Mammary epithelial cell (primary cell): ENCODE measurements at regions of chr18 and their contacts with region 1.

Region 1: DNA sequence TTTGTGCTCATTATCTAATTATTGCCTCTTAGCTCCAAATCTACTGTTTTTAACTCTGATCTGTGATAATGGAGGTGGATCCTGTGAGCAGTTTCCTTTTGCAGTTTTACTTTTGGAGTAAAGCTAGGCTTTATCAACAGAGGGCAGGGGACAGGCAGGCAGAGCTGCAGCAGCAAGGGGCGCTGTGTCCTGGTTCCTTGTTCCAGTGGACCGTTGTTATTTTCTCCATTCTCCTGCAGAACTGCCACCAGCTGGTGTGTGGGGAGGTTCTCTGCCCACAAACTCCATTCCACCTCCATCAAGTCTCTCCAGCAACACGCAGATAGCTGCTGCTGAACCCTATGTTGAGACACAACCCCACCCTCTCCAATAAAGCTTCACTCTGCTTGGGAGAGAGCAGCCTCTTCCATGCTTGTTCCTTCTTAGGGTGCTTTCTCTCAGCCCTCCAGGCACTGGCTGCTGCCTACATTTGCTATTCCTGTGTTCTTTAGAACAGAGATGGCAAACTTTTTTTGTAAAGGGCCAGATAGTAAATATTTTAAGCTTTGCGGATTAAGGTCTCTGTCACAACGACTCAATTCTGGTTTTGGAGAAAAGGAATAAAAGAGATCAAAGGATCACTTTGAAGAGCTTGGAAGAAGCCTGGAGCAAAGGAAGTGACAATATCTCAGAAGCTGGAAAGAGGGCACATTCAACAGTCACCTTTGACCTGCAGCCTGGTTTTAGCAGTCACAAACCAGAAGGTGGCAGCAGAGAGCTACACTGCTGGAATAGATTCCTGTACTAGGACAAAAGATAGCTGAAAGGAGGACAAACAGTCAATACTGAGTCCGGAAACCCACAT is 208.8 kb downstream of the CCDC178 start:
- DNase-seq: peak; percentile 40
- H3K4me3 ChIP-seq: no peak overlapping the region
- H3K27ac ChIP-seq: no peak overlapping the region
- H3K4me1 ChIP-seq: no peaks in the 10 kb centered on the region
- H3K27me3 ChIP-seq: peaks cover 2% of the 10 kb centered on the region
- CTCF ChIP-seq: peak; percentile 94 to 96

Region 2: DNA sequence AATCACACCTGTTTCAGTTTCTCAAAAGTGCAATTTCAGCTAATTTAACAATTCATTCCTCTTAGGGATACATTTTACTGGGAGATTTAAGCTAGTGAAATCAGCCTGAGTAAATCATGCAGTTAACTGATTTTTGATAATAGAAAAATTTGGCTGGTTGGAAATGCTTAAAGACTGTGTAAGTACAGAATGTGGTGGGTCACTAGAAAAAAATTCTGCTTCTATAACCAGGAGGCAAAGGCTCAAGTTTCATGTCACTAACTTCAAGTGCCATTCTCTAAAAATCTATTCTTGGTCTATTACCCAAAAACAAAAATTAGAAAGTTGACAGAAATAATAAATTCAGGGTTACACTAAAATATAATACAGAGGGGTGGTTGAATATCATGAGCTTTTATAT is 62.5 kb before region 1 on chr18:
- CTCF ChIA-PET with region 1: no interaction called
- dilution Hi-C with region 1: no loop called
- in situ Hi-C with region 1: no loop called
- intact Hi-C with region 1: no loop called
- DNase-seq: no peak
- H3K4me3 ChIP-seq: no peak overlapping the region
- H3K27ac ChIP-seq: no peak overlapping the region
- H3K4me1 ChIP-seq: no peaks in the 10 kb centered on the region
- H3K27me3 ChIP-seq: no peaks in the 10 kb centered on the region
- CTCF ChIP-seq: no peak

Region 3: DNA sequence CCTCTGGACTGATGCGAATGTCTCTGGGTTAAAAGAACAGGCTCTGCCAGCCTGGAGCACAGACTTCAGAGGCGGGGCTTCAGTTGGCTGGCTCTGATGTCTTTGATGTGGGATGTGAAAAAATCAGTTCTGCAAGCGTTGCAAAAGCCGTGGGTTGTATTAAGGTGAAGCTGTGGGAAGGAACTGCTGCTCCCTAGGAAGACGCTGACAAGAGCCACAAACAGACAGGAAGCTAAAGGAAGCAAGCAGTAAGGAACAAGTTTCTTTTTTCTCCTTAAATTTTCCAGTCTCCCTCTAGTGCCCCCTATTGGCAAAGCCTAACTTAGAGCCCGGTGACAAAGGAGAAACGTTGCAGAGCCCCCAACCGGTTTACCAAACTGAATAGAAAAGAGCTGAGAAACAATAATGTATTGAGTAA is 30.2 kb before region 1 on chr18:
- CTCF ChIA-PET with region 1: interaction called, 13 read pairs
- dilution Hi-C with region 1: no loop called
- in situ Hi-C with region 1: no loop called
- intact Hi-C with region 1: no loop called
- DNase-seq: peak; percentile 11
- H3K4me3 ChIP-seq: no peak overlapping the region
- H3K27ac ChIP-seq: no peak overlapping the region
- H3K4me1 ChIP-seq: no peaks in the 10 kb centered on the region
- H3K27me3 ChIP-seq: peaks cover 2% of the 10 kb centered on the region
- CTCF ChIP-seq: peak; percentile 50 to 63

Region 4: GRCh38 chr18:33495278-33495677 is 263.6 kb after region 1 on chr18:
- CTCF ChIA-PET with region 1: interaction called, 5 read pairs
- dilution Hi-C with region 1: no loop called
- in situ Hi-C with region 1: loop called (anchors 25 kb)
- intact Hi-C with region 1: loop called (anchors 1 kb)
- DNase-seq: peak; percentile 17
- H3K4me3 ChIP-seq: no peak overlapping the region
- H3K27ac ChIP-seq: no peak overlapping the region
- H3K4me1 ChIP-seq: no peaks in the 10 kb centered on the region
- H3K27me3 ChIP-seq: peaks cover 5% of the 10 kb centered on the region
- CTCF ChIP-seq: peak; percentile 43 to 72

Region 5: GRCh38 chr18:33673689-33674088 is 442.0 kb after region 1 on chr18:
- CTCF ChIA-PET with region 1: no interaction called
- dilution Hi-C with region 1: no loop called
- in situ Hi-C with region 1: no loop called
- intact Hi-C with region 1: loop called (anchors 5 kb)
- DNase-seq: no peak
- H3K4me3 ChIP-seq: no peak overlapping the region
- H3K27ac ChIP-seq: no peak overlapping the region
- H3K4me1 ChIP-seq: no peaks in the 10 kb centered on the region
- H3K27me3 ChIP-seq: no peaks in the 10 kb centered on the region
- CTCF ChIP-seq: peak in 1 of 2 donors; percentile 19

Region 6: DNA sequence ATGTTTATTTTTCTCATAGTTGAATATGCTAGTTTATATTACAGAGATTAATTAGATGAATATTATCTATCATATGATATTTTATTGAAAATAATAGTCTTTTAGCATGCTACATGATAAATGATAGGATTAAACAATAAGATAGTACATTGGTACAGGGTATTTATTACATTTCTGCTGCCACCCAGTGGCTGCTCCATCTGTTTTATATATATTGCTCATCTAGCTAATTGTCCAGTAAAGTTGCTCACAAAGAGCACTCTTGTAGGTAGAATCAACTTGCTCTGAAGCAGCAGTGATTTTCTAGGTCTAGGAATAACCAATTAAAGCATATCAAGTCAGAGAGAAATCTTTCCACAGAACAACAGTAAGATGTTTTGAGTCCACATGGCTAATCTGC is 529.7 kb after region 1 on chr18:
- CTCF ChIA-PET with region 1: no interaction called
- dilution Hi-C with region 1: no loop called
- in situ Hi-C with region 1: no loop called
- intact Hi-C with region 1: loop called (anchors 1 kb)
- DNase-seq: peak; percentile 12
- H3K4me3 ChIP-seq: no peak overlapping the region
- H3K27ac ChIP-seq: no peak overlapping the region
- H3K4me1 ChIP-seq: peaks cover 7% of the 10 kb centered on the region
- H3K27me3 ChIP-seq: peaks cover 2% of the 10 kb centered on the region
- CTCF ChIP-seq: peak; percentile 31 to 54